CD8-positive, alpha-beta T cell (primary cell): ENCODE measurements at regions of chr12 and their contacts with region 1.

Region 1: GRCh38 chr12:127108360-127109215 is 1158.4 kb upstream of the TMEM132C start:
- DNase-seq: peak in 7 of 9 experiments; percentile 9 to 54 (median 32)
- ATAC-seq: no peak
- H3K4me3 ChIP-seq: no peak overlapping the region
- H3K4me3 Mint-ChIP-seq: no peak overlapping the region
- H3K27ac ChIP-seq: no peak overlapping the region
- H3K27ac Mint-ChIP-seq: no peak overlapping the region
- H3K4me1 ChIP-seq: no peaks in the 10 kb centered on the region
- H3K4me1 Mint-ChIP-seq: no peaks in the 10 kb centered on the region
- H3K27me3 ChIP-seq: no peaks in the 10 kb centered on the region
- H3K27me3 Mint-ChIP-seq: peaks cover 17% of the 10 kb centered on the region
- CTCF ChIP-seq: peak; percentile 46

Region 2: GRCh38 chr12:127293507-127294310 is 185.1 kb after region 1 on chr12:
- CTCF ChIA-PET with region 1: interaction called, 9 read pairs
- POLR2A ChIA-PET with region 1: no interaction called
- intact Hi-C with region 1: loop called in 1 of 2 experiments (anchors 5 kb)
- DNase-seq: peak in 7 of 9 experiments; percentile 6 to 53 (median 27)
- ATAC-seq: no peak
- H3K4me3 ChIP-seq: no peak overlapping the region
- H3K4me3 Mint-ChIP-seq: no peak overlapping the region
- H3K27ac ChIP-seq: no peak overlapping the region
- H3K27ac Mint-ChIP-seq: no peak overlapping the region
- H3K4me1 ChIP-seq: no peaks in the 10 kb centered on the region
- H3K4me1 Mint-ChIP-seq: no peaks in the 10 kb centered on the region
- H3K27me3 ChIP-seq: no peaks in the 10 kb centered on the region
- H3K27me3 Mint-ChIP-seq: no peaks in the 10 kb centered on the region
- CTCF ChIP-seq: no peak

Region 3: DNA sequence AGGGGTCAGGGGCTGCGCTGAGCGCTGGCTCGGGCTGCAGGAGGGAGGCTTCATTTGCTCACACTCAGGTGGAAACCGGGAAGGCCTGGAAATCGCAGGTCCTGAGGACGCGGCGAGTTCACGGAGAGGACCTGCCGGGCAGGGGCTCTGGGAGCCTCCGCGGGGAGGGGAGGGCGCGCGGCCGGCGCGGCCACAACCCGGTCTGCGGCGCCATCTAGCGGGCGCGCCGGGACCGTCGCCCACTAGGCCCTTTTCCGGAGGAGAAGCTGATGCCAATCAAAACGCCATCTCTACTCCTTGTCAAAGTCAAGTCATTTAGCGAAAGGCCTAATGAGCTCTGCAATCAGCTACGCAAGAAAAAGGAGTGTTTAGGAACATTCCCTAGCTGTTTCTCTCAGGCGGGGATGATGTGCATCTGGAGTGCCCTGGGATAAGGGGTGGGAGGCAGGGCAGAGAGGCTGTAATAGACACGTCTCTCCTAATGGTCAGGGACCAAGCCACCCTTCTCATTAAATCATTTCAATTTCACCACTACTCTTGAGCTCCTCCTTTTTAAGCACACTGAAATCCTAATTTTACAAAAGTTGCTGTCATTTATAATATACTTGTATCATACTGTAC is 272.6 kb after region 1 on chr12:
- CTCF ChIA-PET with region 1: interaction called, 3 read pairs
- POLR2A ChIA-PET with region 1: no interaction called
- intact Hi-C with region 1: loop called (anchors 1 to 2 kb)
- DNase-seq: peak in 6 of 9 experiments; percentile 1 to 51 (median 11)
- ATAC-seq: no peak
- H3K4me3 ChIP-seq: no peak overlapping the region
- H3K4me3 Mint-ChIP-seq: no peak overlapping the region
- H3K27ac ChIP-seq: no peak overlapping the region
- H3K27ac Mint-ChIP-seq: no peak overlapping the region
- H3K4me1 ChIP-seq: no peaks in the 10 kb centered on the region
- H3K4me1 Mint-ChIP-seq: no peaks in the 10 kb centered on the region
- H3K27me3 ChIP-seq: no peaks in the 10 kb centered on the region
- H3K27me3 Mint-ChIP-seq: no peaks in the 10 kb centered on the region
- CTCF ChIP-seq: no peak

Region 4: DNA sequence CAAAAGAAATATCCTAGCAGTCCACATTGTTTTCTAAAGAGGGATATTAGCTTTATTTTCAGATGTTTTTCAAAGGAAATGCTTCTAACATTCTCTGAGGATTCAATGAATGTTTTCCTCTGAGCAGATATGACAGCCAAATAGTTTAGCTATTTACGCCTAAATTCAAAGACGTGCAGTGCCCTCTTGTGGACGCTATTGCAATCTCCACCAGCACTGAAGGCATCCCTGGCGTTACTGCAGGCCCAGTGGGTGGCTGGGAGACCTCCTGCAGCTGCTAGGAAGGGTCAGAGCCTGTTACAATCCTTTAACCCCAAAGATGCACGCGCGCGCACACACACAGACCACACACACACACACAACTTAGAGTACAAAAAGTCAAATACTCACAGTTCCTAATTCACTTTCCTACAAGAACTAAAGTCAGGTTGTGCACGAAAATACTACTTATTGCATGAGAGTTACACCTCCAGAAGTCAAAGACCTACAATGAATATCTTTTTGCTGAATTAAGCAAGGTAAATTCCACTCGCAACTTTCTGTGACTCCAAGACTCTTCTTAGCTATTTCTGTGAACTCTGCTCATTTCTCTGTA is 569.0 kb after region 1 on chr12:
- CTCF ChIA-PET with region 1: interaction called, 10 read pairs
- POLR2A ChIA-PET with region 1: no interaction called
- intact Hi-C with region 1: loop called in 1 of 2 experiments (anchors 2 kb)
- DNase-seq: peak in 7 of 9 experiments; percentile 1 to 53 (median 27)
- ATAC-seq: no peak
- H3K4me3 ChIP-seq: no peak overlapping the region
- H3K4me3 Mint-ChIP-seq: no peak overlapping the region
- H3K27ac ChIP-seq: no peak overlapping the region
- H3K27ac Mint-ChIP-seq: no peak overlapping the region
- H3K4me1 ChIP-seq: no peaks in the 10 kb centered on the region
- H3K4me1 Mint-ChIP-seq: no peaks in the 10 kb centered on the region
- H3K27me3 ChIP-seq: no peaks in the 10 kb centered on the region
- H3K27me3 Mint-ChIP-seq: no peaks in the 10 kb centered on the region
- CTCF ChIP-seq: peak; percentile 38